Mammary epithelial cell (primary cell): ENCODE measurements at regions of chr22 and their contacts with region 1.

Region 1: GRCh38 chr22:39543095-39543494 is 10.5 kb upstream of the RPS19BP1 start:
- DNase-seq: no peak
- H3K4me3 ChIP-seq: no peak overlapping the region
- H3K27ac ChIP-seq: no peak overlapping the region
- H3K4me1 ChIP-seq: no peaks in the 10 kb centered on the region
- H3K27me3 ChIP-seq: no peaks in the 10 kb centered on the region
- CTCF ChIP-seq: peak; percentile 33 to 54

Region 2: GRCh38 chr22:40036591-40037225 is 493.6 kb after region 1 on chr22:
- CTCF ChIA-PET with region 1: no interaction called
- dilution Hi-C with region 1: no loop called
- in situ Hi-C with region 1: loop called in 1 of 2 experiments (anchors 5 kb)
- intact Hi-C with region 1: loop called (anchors 2 kb)
- DNase-seq: no peak
- H3K4me3 ChIP-seq: no peak overlapping the region
- H3K27ac ChIP-seq: no peak overlapping the region
- H3K4me1 ChIP-seq: peaks cover 23% of the 10 kb centered on the region
- H3K27me3 ChIP-seq: no peaks in the 10 kb centered on the region
- CTCF ChIP-seq: peak; percentile 47 to 65